Endothelial cell of umbilical vein (primary cell): ENCODE measurements at regions of chr7 and their contacts with region 1.

Region 1: GRCh38 chr7:123154231-123154860 is 45.4 kb downstream of the SLC13A1 start:
- DNase-seq: peak; percentile 86
- H3K4me3 ChIP-seq: no peak overlapping the region
- H3K27ac ChIP-seq: no peak overlapping the region
- H3K4me1 ChIP-seq: no peaks in the 10 kb centered on the region
- H3K27me3 ChIP-seq: no peaks in the 10 kb centered on the region
- CTCF ChIP-seq: peak; percentile 65 to 67
- POLR2A ChIP-seq: no peak

Region 2: GRCh38 chr7:122014697-122015096 is 1139.6 kb before region 1 on chr7:
- CTCF ChIA-PET with region 1: no interaction called
- POLR2A ChIA-PET with region 1: no interaction called
- dilution Hi-C with region 1: no loop called
- intact Hi-C with region 1: loop called (anchors 10 kb)
- DNase-seq: peak; percentile 7
- H3K4me3 ChIP-seq: no peak overlapping the region
- H3K27ac ChIP-seq: no peak overlapping the region
- H3K4me1 ChIP-seq: no peaks in the 10 kb centered on the region
- H3K27me3 ChIP-seq: no peaks in the 10 kb centered on the region
- CTCF ChIP-seq: no peak
- POLR2A ChIP-seq: no peak

Region 3: GRCh38 chr7:122550545-122550944 is 603.8 kb before region 1 on chr7:
- CTCF ChIA-PET with region 1: interaction called, 18 read pairs
- POLR2A ChIA-PET with region 1: no interaction called
- dilution Hi-C with region 1: no loop called
- intact Hi-C with region 1: loop called (anchors 1 kb)
- DNase-seq: peak; percentile 63
- H3K4me3 ChIP-seq: no peak overlapping the region
- H3K27ac ChIP-seq: no peak overlapping the region
- H3K4me1 ChIP-seq: no peaks in the 10 kb centered on the region
- H3K27me3 ChIP-seq: no peaks in the 10 kb centered on the region
- CTCF ChIP-seq: peak in 1 of 2 donors; percentile 20
- POLR2A ChIP-seq: no peak

Region 4: GRCh38 chr7:122886357-122887081 is 267.8 kb before region 1 on chr7 and contains the start of gene CADPS2:
- CTCF ChIA-PET with region 1: interaction called, 30 read pairs
- POLR2A ChIA-PET with region 1: no interaction called
- dilution Hi-C with region 1: no loop called
- intact Hi-C with region 1: loop called (anchors 1 kb)
- DNase-seq: peak; percentile 92
- H3K4me3 ChIP-seq: peak within 1 kb of the TSS; percentile 51 to 92 (median 70)
- H3K27ac ChIP-seq: peak within 1 kb of the TSS; percentile 66
- H3K4me1 ChIP-seq: peaks cover 26% of the 10 kb centered on the region
- H3K27me3 ChIP-seq: no peaks in the 10 kb centered on the region
- CTCF ChIP-seq: peak; percentile 13 to 46
- POLR2A ChIP-seq: peak; percentile 84
- total RNA-seq, gene CADPS2: 20.0 and 22.6 TPM in 2 replicates

Region 5: GRCh38 chr7:123070702-123071286 is 83.6 kb before region 1 on chr7:
- CTCF ChIA-PET with region 1: interaction called, 13 read pairs
- POLR2A ChIA-PET with region 1: no interaction called
- dilution Hi-C with region 1: no loop called
- intact Hi-C with region 1: no loop called
- DNase-seq: peak; percentile 10
- H3K4me3 ChIP-seq: no peak overlapping the region
- H3K27ac ChIP-seq: no peak overlapping the region
- H3K4me1 ChIP-seq: no peaks in the 10 kb centered on the region
- H3K27me3 ChIP-seq: peaks cover 2 to 7% of the 10 kb centered on the region in 2 experiments
- CTCF ChIP-seq: peak; percentile 17 to 34
- POLR2A ChIP-seq: no peak

Region 6: GRCh38 chr7:123170333-123171246 is 16.2 kb after region 1 on chr7:
- CTCF ChIA-PET with region 1: interaction called, 19 read pairs
- POLR2A ChIA-PET with region 1: no interaction called
- dilution Hi-C with region 1: no loop called
- intact Hi-C with region 1: no loop called
- DNase-seq: no peak
- H3K4me3 ChIP-seq: no peak overlapping the region
- H3K27ac ChIP-seq: no peak overlapping the region
- H3K4me1 ChIP-seq: no peaks in the 10 kb centered on the region
- H3K27me3 ChIP-seq: no peaks in the 10 kb centered on the region
- CTCF ChIP-seq: no peak
- POLR2A ChIP-seq: no peak

Region 7: DNA sequence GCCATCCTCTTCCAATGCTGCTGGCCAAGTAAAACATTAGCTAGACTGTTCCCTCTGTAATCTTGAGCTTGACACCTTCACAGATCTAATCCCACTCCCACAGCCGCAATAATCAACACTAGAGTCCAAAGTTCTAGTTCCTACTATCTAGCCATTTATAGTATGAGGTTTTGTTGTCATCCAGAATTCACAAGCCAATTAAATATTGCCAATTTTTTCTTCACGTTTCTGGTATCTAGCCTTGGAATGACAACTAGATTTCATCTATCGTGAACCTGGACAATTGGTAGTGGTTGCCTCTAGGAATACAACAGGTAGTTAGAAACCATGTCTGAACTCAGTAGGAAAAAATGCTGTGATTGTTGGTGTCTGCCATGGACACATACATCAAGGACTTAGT is 584.0 kb after region 1 on chr7:
- CTCF ChIA-PET with region 1: no interaction called
- POLR2A ChIA-PET with region 1: no interaction called
- dilution Hi-C with region 1: no loop called
- intact Hi-C with region 1: no loop called
- DNase-seq: no peak
- H3K4me3 ChIP-seq: no peak overlapping the region
- H3K27ac ChIP-seq: no peak overlapping the region
- H3K4me1 ChIP-seq: peaks cover 2% of the 10 kb centered on the region
- H3K27me3 ChIP-seq: no peaks in the 10 kb centered on the region
- CTCF ChIP-seq: no peak
- POLR2A ChIP-seq: no peak